Panc1 (cell line): ENCODE measurements at regions of chr2 and their contacts with region 1.

Region 1: GRCh38 chr2:108988796-108989713 is at the start of gene EDAR:
- DNase-seq: no peak
- ATAC-seq: peak; percentile 88
- H3K4me3 ChIP-seq: no peak within 1 kb of the TSS
- H3K27ac ChIP-seq: no peak within 1 kb of the TSS
- H3K4me1 ChIP-seq: no peaks in the 10 kb centered on the region
- H3K27me3 ChIP-seq: peaks cover 11% of the 10 kb centered on the region
- CTCF ChIP-seq: peak; percentile 77
- total RNA-seq, gene EDAR: not detected

Region 2: GRCh38 chr2:108933691-108934117 is 55.4 kb before region 1 on chr2:
- CTCF ChIA-PET with region 1: no interaction called
- POLR2A ChIA-PET with region 1: no interaction called
- in situ Hi-C with region 1: loop called (anchors 10 kb)
- intact Hi-C with region 1: no loop called
- DNase-seq: no peak
- ATAC-seq: no peak
- H3K4me3 ChIP-seq: no peak overlapping the region
- H3K27ac ChIP-seq: no peak overlapping the region
- H3K4me1 ChIP-seq: no peaks in the 10 kb centered on the region
- H3K27me3 ChIP-seq: no peaks in the 10 kb centered on the region; the same call in 1 of the 2 replicates
- CTCF ChIP-seq: no peak

Region 3: GRCh38 chr2:108965540-108966236 is 23.4 kb before region 1 on chr2:
- CTCF ChIA-PET with region 1: no interaction called
- POLR2A ChIA-PET with region 1: no interaction called
- in situ Hi-C with region 1: no loop called
- intact Hi-C with region 1: no loop called
- DNase-seq: no peak
- ATAC-seq: no peak
- H3K4me3 ChIP-seq: no peak overlapping the region
- H3K27ac ChIP-seq: no peak overlapping the region
- H3K4me1 ChIP-seq: no peaks in the 10 kb centered on the region
- H3K27me3 ChIP-seq: no peaks in the 10 kb centered on the region
- CTCF ChIP-seq: no peak

Region 4: GRCh38 chr2:109410039-109410815 is 421.2 kb after region 1 on chr2:
- CTCF ChIA-PET with region 1: no interaction called
- POLR2A ChIA-PET with region 1: no interaction called
- in situ Hi-C with region 1: no loop called
- intact Hi-C with region 1: no loop called
- DNase-seq: no peak
- ATAC-seq: no peak
- H3K4me3 ChIP-seq: no peak overlapping the region
- H3K27ac ChIP-seq: no peak overlapping the region
- H3K4me1 ChIP-seq: no peaks in the 10 kb centered on the region
- H3K27me3 ChIP-seq: no peaks in the 10 kb centered on the region
- CTCF ChIP-seq: no peak